ENCODE measurements at regions of chr1 and their contacts with region 1.

Region 1: DNA sequence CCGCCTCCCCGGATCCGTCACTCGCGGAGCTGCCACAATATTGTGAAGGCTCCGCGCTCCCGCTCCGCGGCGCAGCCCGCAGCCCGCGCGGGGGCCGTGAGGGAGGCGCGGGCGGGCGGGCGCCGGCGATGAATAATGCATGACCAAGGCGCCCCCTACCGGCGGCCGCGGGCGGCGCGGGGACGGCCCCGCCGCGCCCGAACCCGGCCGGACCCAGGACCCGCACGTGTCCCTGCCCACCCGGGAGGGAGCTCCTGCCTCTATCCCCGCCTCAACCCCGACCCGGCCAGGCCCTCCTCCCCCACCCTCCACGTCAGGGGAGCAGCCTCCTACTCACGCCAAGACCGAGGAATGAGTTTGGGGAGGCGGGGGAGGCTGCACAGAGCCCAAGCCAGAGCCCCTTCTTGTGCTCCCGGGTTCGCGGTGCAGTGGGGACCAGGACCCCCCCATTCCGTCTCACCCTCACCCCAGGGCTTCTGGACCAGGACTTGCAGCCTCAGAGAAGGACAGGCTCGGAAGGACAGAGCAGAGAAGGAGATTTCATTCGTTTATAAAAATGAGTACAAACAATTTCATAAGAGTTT is 70.8 kb upstream of the CASZ1 start:
- DNase-seq: no peak
- ATAC-seq: peak; percentile 94
- H3K4me3 ChIP-seq: peak overlapping the region; percentile 26 to 43
- H3K27ac ChIP-seq: no peak overlapping the region
- H3K4me1 ChIP-seq: peaks cover 8 to 11% of the 10 kb centered on the region in 2 experiments; a peak in 3 of 4 replicates
- H3K27me3 ChIP-seq: peaks cover 9% of the 10 kb centered on the region; the same call in 1 of the 2 replicates
- CTCF ChIP-seq: peak in 1 of 3 experiments; percentile 31; a peak in 2 of 6 replicates
- POLR2A ChIP-seq: no peak
- RAD21 ChIP-seq: peak; percentile 59

Region 2: GRCh38 chr1:10507111-10507879 is 359.9 kb before region 1 on chr1:
- CTCF ChIA-PET with region 1: interaction called, 8 read pairs
- POLR2A ChIA-PET with region 1: no interaction called
- RAD21 ChIA-PET with region 1: interaction called in 1 of 2 experiments, 3 read pairs
- intact Hi-C with region 1: loop called (anchors 1 kb)
- DNase-seq: peak; percentile 41
- ATAC-seq: peak; percentile 91
- H3K4me3 ChIP-seq: no peak overlapping the region
- H3K27ac ChIP-seq: no peak overlapping the region
- H3K4me1 ChIP-seq: peaks cover 17 to 30% of the 10 kb centered on the region in 2 experiments
- H3K27me3 ChIP-seq: no peaks in the 10 kb centered on the region
- CTCF ChIP-seq: peak; percentile 86 to 96 (median 94)
- POLR2A ChIP-seq: no peak
- RAD21 ChIP-seq: peak; percentile 92

Region 3: DNA sequence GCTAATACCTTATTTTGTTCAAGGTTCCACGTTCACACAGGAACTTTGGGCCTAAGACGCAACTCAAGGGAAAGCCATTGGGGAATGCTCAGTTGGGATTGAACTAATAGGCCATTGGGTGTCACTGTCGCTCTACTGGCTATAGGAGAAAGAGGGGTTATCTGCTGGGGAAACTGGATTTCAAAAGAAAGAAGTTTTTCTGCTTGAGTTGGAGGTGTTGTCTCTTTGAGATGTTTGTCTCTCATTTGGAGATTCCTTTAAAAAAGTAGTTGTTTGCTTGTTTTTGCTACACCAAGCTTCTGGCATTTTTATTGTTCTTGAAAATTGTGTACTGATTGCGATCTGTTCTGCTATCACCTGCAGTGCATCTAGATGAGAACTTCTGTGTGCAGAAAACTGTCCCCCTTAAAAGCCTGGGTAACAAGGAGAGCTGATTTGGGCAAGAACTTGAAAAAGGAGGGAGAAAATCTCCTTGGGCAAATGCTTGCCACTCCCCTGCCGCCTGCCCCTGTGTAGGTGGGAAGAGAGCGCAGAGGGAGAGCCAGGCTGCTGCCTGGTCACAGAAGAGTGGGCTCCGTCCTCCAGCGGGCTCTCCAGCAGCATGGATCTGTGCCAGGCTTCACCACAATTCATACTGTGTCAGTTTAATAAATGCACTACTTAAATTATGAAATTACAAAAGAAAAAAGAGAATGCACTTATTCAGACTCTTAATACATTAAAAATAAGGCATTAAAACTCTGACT is 352.6 kb before region 1 on chr1:
- CTCF ChIA-PET with region 1: interaction called, 5 read pairs
- POLR2A ChIA-PET with region 1: no interaction called
- RAD21 ChIA-PET with region 1: no interaction called
- intact Hi-C with region 1: loop called (anchors 2 kb)
- DNase-seq: peak; percentile 29
- ATAC-seq: peak; percentile 56
- H3K4me3 ChIP-seq: no peak overlapping the region
- H3K27ac ChIP-seq: no peak overlapping the region
- H3K4me1 ChIP-seq: peaks cover 14 to 20% of the 10 kb centered on the region in 2 experiments
- H3K27me3 ChIP-seq: no peaks in the 10 kb centered on the region
- CTCF ChIP-seq: peak; percentile 49 to 66 (median 62)
- POLR2A ChIP-seq: no peak
- RAD21 ChIP-seq: peak; percentile 79

Region 4: GRCh38 chr1:10530281-10530740 is 336.9 kb before region 1 on chr1:
- CTCF ChIA-PET with region 1: interaction called, 8 read pairs
- POLR2A ChIA-PET with region 1: no interaction called
- RAD21 ChIA-PET with region 1: interaction called in 1 of 2 experiments, 3 read pairs
- intact Hi-C with region 1: loop called (anchors 2 kb)
- DNase-seq: no peak
- ATAC-seq: peak; percentile 64
- H3K4me3 ChIP-seq: no peak overlapping the region
- H3K27ac ChIP-seq: no peak overlapping the region
- H3K4me1 ChIP-seq: peaks cover 31 to 42% of the 10 kb centered on the region in 2 experiments
- H3K27me3 ChIP-seq: no peaks in the 10 kb centered on the region
- CTCF ChIP-seq: peak; percentile 50 to 70 (median 69)
- POLR2A ChIP-seq: no peak
- RAD21 ChIP-seq: peak; percentile 77

Region 5: DNA sequence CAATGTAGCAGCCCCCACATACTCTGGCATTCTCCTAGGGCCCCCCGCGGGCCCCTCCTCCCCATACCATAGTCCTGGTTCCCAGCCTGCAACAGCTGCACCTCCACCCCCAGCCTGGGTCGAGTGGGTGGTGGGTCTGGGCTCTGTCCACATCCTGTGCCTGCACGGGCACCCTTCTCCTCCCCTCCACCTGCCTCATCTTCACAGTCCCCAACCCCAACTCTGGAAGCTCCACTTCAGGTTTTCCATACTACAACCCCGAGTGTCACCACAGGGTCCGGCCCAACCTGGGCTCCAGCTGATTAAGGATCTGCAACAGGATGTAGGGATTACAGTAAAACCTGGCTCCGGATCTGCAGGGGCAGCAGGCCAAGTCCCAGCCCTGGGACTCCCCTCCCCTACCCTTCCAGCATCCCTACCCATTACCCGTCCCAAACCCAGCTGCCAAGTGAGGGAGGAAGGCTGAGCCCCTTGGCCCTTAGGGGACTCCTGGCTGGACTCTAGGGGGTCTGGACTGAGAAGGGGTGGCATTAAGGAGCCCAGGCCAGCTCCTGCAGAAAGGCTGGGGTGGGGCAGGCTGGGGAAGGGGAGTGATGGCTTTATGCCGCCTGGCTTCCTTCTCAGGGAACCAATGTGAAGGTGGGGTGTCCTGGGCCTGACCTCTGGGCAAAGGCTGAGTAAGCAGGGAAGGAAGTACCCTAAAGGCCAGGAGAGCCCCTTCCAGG is 187.6 kb before region 1 on chr1:
- CTCF ChIA-PET with region 1: no interaction called
- POLR2A ChIA-PET with region 1: no interaction called
- RAD21 ChIA-PET with region 1: no interaction called
- intact Hi-C with region 1: loop called (anchors 5 kb)
- DNase-seq: peak; percentile 65
- ATAC-seq: peak; percentile 85
- H3K4me3 ChIP-seq: no peak overlapping the region
- H3K27ac ChIP-seq: no peak overlapping the region
- H3K4me1 ChIP-seq: peaks cover 0 to 6% of the 10 kb centered on the region in 2 experiments; a peak in 1 of 4 replicates
- H3K27me3 ChIP-seq: no peaks in the 10 kb centered on the region
- CTCF ChIP-seq: no peak
- POLR2A ChIP-seq: no peak
- RAD21 ChIP-seq: no peak

Region 6: GRCh38 chr1:10694633-10695627 is 172.3 kb before region 1 on chr1:
- CTCF ChIA-PET with region 1: no interaction called
- POLR2A ChIA-PET with region 1: no interaction called
- RAD21 ChIA-PET with region 1: interaction called in 1 of 2 experiments, 3 read pairs
- intact Hi-C with region 1: loop called (anchors 5 kb)
- DNase-seq: peak; percentile 60
- ATAC-seq: peak; percentile 88
- H3K4me3 ChIP-seq: peak overlapping the region in 1 of 2 experiments; percentile 40; a peak in 1 of 4 replicates
- H3K27ac ChIP-seq: no peak overlapping the region; the same call in 1 of the 2 replicates
- H3K4me1 ChIP-seq: peaks cover 14 to 35% of the 10 kb centered on the region in 2 experiments
- H3K27me3 ChIP-seq: no peaks in the 10 kb centered on the region
- CTCF ChIP-seq: no peak
- POLR2A ChIP-seq: no peak
- RAD21 ChIP-seq: no peak

Measured in HCT116 (cell line).